ENCODE measurements at regions of chr19 and their contacts with region 1.

Region 1: GRCh38 chr19:21505459-21506451 is at the start of gene ZNF429:
- DNase-seq: peak; percentile 93
- H3K4me3 Mint-ChIP-seq: peak within 1 kb of the TSS; percentile 100
- H3K27ac Mint-ChIP-seq: peak within 1 kb of the TSS; percentile 96
- H3K4me1 Mint-ChIP-seq: peaks cover 25% of the 10 kb centered on the region
- H3K27me3 Mint-ChIP-seq: no peaks in the 10 kb centered on the region
- total RNA-seq, gene ZNF429: 8.0 to 8.3 TPM

Region 2: GRCh38 chr19:20661150-20661819 is 844.5 kb before region 1 on chr19 and contains the start of gene ZNF626:
- CTCF ChIA-PET with region 1: no interaction called
- POLR2A ChIA-PET with region 1: interaction called, 13 read pairs
- DNase-seq: peak; percentile 92
- H3K4me3 Mint-ChIP-seq: peak within 1 kb of the TSS; percentile 88
- H3K27ac Mint-ChIP-seq: peak within 1 kb of the TSS; percentile 84
- H3K4me1 Mint-ChIP-seq: peaks cover 23% of the 10 kb centered on the region
- H3K27me3 Mint-ChIP-seq: no peaks in the 10 kb centered on the region
- total RNA-seq, gene ZNF626: 7.6 to 8.5 TPM

Region 3: DNA sequence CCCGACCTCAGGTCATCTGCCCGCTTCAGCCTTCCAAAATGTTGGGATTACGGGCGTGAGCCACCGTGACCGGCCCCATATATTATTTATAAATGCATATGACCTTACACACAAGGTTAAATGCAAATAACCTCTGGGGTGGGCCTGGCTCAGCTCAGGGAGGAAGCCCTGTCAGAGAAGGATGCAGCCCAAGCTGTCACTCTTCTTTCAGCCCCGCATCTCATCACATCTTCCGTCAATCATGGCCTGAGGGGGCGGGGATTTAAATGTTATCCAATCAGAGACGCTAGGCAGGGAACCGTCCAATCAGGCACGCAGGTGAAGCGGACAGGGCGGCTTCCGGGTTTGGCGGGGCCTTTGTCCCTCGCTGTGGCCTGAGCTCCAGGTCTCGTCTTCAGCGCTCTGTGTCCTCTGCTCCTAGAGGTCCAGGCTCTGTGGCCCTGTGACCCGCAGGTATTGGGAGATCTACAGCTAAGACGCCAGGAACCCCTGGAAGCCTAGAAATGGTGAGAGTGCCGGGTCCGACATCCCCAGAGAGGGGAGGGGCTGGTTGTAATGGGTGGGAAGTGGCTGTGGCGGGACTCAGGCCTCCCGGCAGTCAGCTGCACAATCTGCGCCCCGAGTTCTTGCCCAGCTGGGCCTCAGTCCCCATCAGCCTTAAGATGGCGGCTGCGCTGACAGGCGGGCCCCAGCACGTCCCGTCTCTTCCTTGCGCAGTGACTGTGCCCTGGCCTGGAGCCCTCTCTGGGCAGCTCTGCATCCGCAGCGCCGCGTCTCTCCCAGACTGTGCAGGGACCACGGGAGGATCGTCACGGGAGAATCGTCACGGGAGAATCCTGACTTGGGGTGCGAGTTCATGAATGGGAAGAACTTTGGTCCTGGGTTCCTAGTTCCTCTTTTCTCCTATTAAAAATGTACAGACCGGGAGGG is 485.2 kb before region 1 on chr19 and contains the start of gene ZNF430:
- CTCF ChIA-PET with region 1: no interaction called
- POLR2A ChIA-PET with region 1: interaction called, 16 read pairs
- DNase-seq: peak; percentile 96
- H3K4me3 Mint-ChIP-seq: peak within 1 kb of the TSS; percentile 99
- H3K27ac Mint-ChIP-seq: peak within 1 kb of the TSS; percentile 99
- H3K4me1 Mint-ChIP-seq: peaks cover 39% of the 10 kb centered on the region
- H3K27me3 Mint-ChIP-seq: no peaks in the 10 kb centered on the region
- total RNA-seq, gene ZNF430: 24.0 to 27.0 TPM

Region 4: DNA sequence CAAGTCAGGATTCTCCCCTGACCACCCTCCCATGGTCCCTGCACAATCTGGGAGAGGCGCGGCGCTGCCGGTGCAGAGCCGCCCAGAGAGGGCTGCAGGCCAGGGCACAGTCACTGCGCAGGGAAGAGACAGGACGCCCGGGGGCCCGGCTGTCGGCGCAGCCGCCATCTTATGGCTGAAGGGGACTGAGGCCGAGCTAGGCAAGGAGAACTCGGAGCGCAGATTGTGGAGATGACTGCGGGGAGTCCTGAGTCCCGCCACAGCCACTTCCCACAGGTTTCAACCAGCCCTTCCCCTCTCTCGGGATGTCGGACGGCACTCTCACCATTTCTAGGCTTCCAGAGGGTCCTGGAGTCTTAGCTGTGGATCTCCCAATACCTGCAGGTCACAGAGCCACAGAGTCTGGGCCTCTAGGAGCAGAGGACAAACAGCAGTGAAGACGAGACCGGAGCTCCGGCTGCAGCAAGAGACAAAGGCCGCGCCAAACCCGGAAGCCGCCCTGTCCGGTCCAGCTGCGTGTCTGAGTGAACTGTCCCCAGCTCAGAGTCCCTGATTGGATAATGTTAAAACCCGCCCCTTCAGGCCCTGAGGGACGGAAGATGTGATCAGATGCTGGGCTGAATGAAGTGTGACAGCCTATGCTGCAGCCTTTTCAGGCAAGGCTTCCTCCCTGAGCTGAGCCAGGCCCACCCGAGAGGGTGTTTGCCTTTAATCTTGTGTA is 176.7 kb before region 1 on chr19 and contains the start of gene ZNF708:
- CTCF ChIA-PET with region 1: no interaction called
- POLR2A ChIA-PET with region 1: interaction called, 33 read pairs
- DNase-seq: peak; percentile 84
- H3K4me3 Mint-ChIP-seq: peak within 1 kb of the TSS; percentile 97
- H3K27ac Mint-ChIP-seq: peak within 1 kb of the TSS; percentile 99
- H3K4me1 Mint-ChIP-seq: peaks cover 34% of the 10 kb centered on the region
- H3K27me3 Mint-ChIP-seq: no peaks in the 10 kb centered on the region
- total RNA-seq, gene ZNF708: 14.8 to 16.7 TPM

Region 5: GRCh38 chr19:21474671-21475181 is 31.0 kb before region 1 on chr19:
- CTCF ChIA-PET with region 1: no interaction called
- POLR2A ChIA-PET with region 1: interaction called, 18 read pairs
- DNase-seq: peak; percentile 72
- H3K4me3 Mint-ChIP-seq: peak overlapping the region; percentile 63
- H3K27ac Mint-ChIP-seq: no peak overlapping the region
- H3K4me1 Mint-ChIP-seq: peaks cover 1% of the 10 kb centered on the region
- H3K27me3 Mint-ChIP-seq: no peaks in the 10 kb centered on the region

Region 6: DNA sequence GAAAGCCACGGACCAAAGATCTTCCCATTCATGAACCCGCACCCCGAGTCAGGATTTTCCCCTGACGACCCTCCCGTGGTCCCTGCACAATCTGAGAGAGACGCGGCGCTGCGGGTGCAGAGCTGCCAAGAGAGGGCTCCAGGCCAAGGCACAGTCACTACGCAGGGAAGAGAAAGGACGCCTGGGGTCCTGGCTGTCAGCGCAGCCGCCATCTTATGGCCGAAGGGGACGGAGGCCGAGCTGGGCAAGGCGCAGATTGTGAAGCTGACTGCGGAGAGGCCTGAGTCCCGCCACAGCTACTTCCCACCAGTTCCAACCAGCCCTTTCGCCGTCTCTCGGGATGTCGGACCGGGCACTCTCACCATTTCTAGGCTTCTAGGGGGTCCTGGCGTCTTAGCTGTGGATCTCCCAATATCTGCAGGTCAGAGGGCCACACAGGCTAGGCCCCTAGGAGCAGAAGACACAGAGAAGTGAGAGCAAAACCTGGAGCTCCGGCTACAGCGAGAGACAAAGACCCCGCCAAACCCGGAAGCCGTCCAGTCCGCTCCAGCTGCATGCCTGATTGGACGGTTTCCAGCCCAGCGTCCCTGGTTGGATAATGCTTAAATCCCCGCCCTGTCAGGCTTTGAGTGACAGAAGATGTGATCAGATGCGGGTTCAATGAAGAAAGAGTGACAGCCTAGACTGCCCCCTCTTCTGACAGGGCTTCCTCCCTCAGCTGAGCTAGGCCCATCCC is 261.5 kb after region 1 on chr19 and contains the start of gene ZNF100:
- CTCF ChIA-PET with region 1: no interaction called
- POLR2A ChIA-PET with region 1: interaction called, 14 read pairs
- DNase-seq: peak; percentile 88
- H3K4me3 Mint-ChIP-seq: peak within 1 kb of the TSS; percentile 93
- H3K27ac Mint-ChIP-seq: peak within 1 kb of the TSS; percentile 80
- H3K4me1 Mint-ChIP-seq: peaks cover 18% of the 10 kb centered on the region
- H3K27me3 Mint-ChIP-seq: no peaks in the 10 kb centered on the region
- total RNA-seq, gene ZNF100: 18.9 to 19.5 TPM

Measured in activated CD4-positive, alpha-beta memory T cell treated with anti-CD3 and anti-CD28 coated beads, Interleukin-2, amount 10 ng/mL, durations not matched to agents 7 days and 5 days (primary cell).